AG04449 (cell line): ENCODE measurements at regions of chr9 and their contacts with region 1.

Region 1: GRCh38 chr9:133742849-133743444 is 4.8 kb upstream of the SARDH start:
- DNase-seq: no peak
- H3K4me3 ChIP-seq: no peak overlapping the region
- CTCF ChIP-seq: peak; percentile 97

Region 2: GRCh38 chr9:133726401-133727276 is 16.3 kb before region 1 on chr9:
- CTCF ChIA-PET with region 1: interaction called, 10 read pairs
- POLR2A ChIA-PET with region 1: no interaction called
- DNase-seq: no peak
- H3K4me3 ChIP-seq: no peak overlapping the region
- CTCF ChIP-seq: peak; percentile 51

Region 3: GRCh38 chr9:133768859-133769425 is 26.0 kb after region 1 on chr9:
- CTCF ChIA-PET with region 1: interaction called, 12 read pairs
- POLR2A ChIA-PET with region 1: no interaction called
- DNase-seq: no peak
- H3K4me3 ChIP-seq: no peak overlapping the region
- CTCF ChIP-seq: no peak